Head of caudate nucleus (tissue), 42 donors: ENCODE measurements at regions of chr3 and their contacts with region 1.

Region 1: GRCh38 chr3:173395412-173396181 is 1.9 kb upstream of the NLGN1 start:
- DNase-seq: peak; percentile 71 to 96 (median 91)

Region 2: GRCh38 chr3:173913397-173913796 is 517.8 kb after region 1 on chr3:
- intact Hi-C with region 1: loop called (anchors 10 kb)
- DNase-seq: peak in 16 of 42 donors; percentile 9 to 62 (median 28)